Right cardiac atrium (tissue), 5 donors: ENCODE measurements at regions of chr20 and their contacts with region 1.

Region 1: DNA sequence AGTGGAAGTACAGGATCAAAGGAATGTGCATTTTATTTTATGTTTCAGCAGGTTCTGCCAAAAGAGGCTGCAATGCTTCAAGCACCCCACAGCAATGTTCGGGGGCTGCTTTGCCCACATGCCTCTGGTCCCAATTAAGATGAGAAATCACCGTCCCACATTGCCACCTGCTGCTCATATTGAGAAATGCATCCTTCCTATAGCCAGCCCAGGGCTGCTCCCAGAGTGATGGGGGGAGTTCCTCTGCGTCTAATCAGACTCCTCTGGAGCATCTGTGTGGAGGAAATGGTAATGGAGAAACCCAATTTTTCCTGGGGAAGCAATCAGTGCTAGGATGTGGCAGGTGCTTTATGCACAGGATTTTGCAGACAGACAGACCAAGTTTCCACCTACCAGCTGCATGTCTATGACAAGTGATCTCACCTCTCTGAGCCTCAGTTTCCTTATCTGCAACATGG is 33.7 kb downstream of the PTGIS start:
- DNase-seq: peak in 1 of 3 donors; percentile 60
- ATAC-seq: peak; percentile 64 to 77
- H3K4me3 ChIP-seq: no peak overlapping the region
- H3K27ac ChIP-seq: no peak overlapping the region
- H3K4me1 ChIP-seq: no peaks in the 10 kb centered on the region
- H3K27me3 ChIP-seq: no peaks in the 10 kb centered on the region

Region 2: GRCh38 chr20:49330544-49331239 is 203.6 kb before region 1 on chr20:
- intact Hi-C with region 1: loop called in 3 of 4 experiments (anchors 2 to 5 kb)
- DNase-seq: no peak
- ATAC-seq: no peak
- H3K4me3 ChIP-seq: no peak overlapping the region
- H3K27ac ChIP-seq: no peak overlapping the region
- H3K4me1 ChIP-seq: no peaks in the 10 kb centered on the region
- H3K27me3 ChIP-seq: no peaks in the 10 kb centered on the region

Region 3: GRCh38 chr20:49338061-49338460 is 196.2 kb before region 1 on chr20:
- intact Hi-C with region 1: loop called in 3 of 4 experiments (anchors 2 to 5 kb)
- DNase-seq: no peak
- ATAC-seq: no peak
- H3K4me3 ChIP-seq: no peak overlapping the region
- H3K27ac ChIP-seq: no peak overlapping the region
- H3K4me1 ChIP-seq: no peaks in the 10 kb centered on the region
- H3K27me3 ChIP-seq: no peaks in the 10 kb centered on the region

Region 4: GRCh38 chr20:49435659-49436058 is 98.6 kb before region 1 on chr20:
- intact Hi-C with region 1: no loop called
- DNase-seq: no peak
- ATAC-seq: no peak
- H3K4me3 ChIP-seq: no peak overlapping the region
- H3K27ac ChIP-seq: no peak overlapping the region
- H3K4me1 ChIP-seq: no peaks in the 10 kb centered on the region
- H3K27me3 ChIP-seq: no peaks in the 10 kb centered on the region